Ovary (tissue), 10 donors: ENCODE measurements at regions of chr5 and their contacts with region 1.

Region 1: DNA sequence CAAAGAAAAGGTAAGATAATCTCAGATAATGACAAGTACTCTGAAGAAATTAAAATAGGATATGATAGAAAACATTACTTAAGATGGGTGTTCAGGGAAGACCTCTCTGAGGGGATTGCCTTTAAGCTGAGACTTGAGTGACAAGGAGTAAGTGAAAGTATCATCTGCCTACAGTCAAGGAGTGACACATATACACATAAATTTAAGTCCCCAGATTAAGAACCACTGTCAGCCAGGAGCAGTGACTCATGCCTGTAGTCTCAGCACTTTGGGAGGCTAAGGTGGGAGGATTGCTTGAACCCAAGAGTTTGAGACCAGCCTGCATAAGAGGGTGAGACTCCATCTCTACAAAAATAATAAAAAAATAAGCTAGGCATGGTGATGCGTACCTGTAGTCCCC is 19.7 kb upstream of the ANKHD1 start:
- DNase-seq: no peak
- H3K4me3 ChIP-seq: no peak overlapping the region
- H3K27ac ChIP-seq: no peak overlapping the region
- H3K4me1 ChIP-seq: no peaks in the 10 kb centered on the region
- H3K27me3 ChIP-seq: no peaks in the 10 kb centered on the region
- CTCF ChIP-seq: no peak
- EP300 ChIP-seq: no peak
- POLR2A ChIP-seq: no peak

Region 2: GRCh38 chr5:140481758-140482157 is 99.8 kb after region 1 on chr5:
- intact Hi-C with region 1: no loop called
- DNase-seq: no peak
- H3K4me3 ChIP-seq: no peak overlapping the region
- H3K27ac ChIP-seq: no peak overlapping the region
- H3K4me1 ChIP-seq: no peaks in the 10 kb centered on the region
- H3K27me3 ChIP-seq: no peaks in the 10 kb centered on the region
- CTCF ChIP-seq: no peak
- EP300 ChIP-seq: no peak
- POLR2A ChIP-seq: no peak

Region 3: DNA sequence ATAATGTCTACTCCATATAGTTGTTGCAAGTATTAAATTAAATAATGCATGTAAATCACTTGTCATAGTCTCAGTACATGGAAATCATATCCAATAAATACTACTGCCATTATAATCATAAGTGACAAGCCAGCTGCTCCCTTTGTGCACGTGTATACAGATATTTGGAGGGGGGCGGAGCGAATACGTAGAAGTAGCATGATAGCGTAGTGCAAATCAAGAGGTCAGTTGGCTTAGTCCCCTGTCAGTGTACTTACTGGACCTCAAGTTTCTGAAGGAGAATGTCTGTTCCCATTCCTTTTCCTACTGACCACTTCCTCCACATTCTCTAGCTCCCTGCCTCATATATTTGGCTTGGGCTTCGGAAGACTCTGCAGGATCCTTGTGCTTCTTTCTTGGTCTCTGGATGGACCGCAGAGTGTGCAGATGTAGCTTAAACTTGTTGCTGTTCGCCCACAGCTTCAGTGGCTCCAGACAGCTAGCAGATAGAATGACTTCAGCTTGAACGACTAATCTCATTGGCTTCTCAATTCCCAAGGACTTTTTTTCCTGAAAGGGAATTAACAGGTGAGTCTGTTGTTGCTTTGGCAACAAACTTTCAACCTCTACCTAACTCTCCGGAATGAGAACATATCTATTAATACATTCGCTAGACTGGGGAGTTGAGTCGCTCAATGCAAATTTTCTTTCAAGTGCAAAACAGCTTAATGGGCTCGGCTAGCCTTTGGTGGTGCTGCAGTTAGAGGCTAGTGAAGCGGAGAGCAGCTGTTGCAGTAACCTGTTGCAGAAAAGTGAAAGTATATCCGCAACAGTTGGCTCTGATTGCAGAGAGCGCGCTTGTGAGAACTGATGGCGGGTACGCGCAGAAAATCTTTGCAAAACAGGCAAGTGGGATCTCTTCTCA is 668.9 kb after region 1 on chr5 and contains the start of gene PCDHB1:
- intact Hi-C with region 1: loop called in 1 of 4 experiments (anchors 10 kb)
- DNase-seq: no peak
- H3K4me3 ChIP-seq: peak within 1 kb of the TSS; percentile 30
- H3K27ac ChIP-seq: no peak within 1 kb of the TSS
- H3K4me1 ChIP-seq: no peaks in the 10 kb centered on the region
- H3K27me3 ChIP-seq: no peaks in the 10 kb centered on the region
- CTCF ChIP-seq: no peak
- EP300 ChIP-seq: no peak
- POLR2A ChIP-seq: no peak
- total RNA-seq, gene PCDHB1: 0.03 to 0.34 TPM in 2 of 7 donors, not detected in the others